RWPE1 (cell line): ENCODE measurements at regions of chr1 and their contacts with region 1.

Region 1: GRCh38 chr1:157147906-157148717 is 9.9 kb upstream of the ETV3 start:
- DNase-seq: no peak
- H3K27ac ChIP-seq: no peak overlapping the region
- CTCF ChIP-seq: no peak

Region 2: DNA sequence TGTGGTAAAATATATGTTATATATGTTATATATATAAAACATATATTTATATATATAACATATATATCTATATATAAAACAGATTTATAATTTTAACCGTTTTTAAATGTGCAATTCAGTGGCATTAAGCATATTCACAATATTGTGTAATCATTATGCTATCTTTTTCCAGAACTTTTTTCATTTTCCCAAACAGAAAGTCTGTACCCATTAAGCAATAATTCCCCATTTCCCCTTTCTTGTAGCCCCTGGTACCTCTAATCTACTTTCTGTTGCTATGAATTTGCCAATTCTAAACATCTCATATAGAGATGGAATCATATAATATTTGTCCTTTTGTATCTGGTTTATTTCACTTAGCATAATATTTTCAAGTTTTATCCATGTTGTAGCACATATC is 91.8 kb before region 1 on chr1:
- CTCF ChIA-PET with region 1: no interaction called
- POLR2A ChIA-PET with region 1: no interaction called
- DNase-seq: no peak
- H3K27ac ChIP-seq: no peak overlapping the region
- CTCF ChIP-seq: no peak

Region 3: GRCh38 chr1:157090196-157090647 is 57.9 kb before region 1 on chr1:
- CTCF ChIA-PET with region 1: interaction called, 154 read pairs
- POLR2A ChIA-PET with region 1: no interaction called
- DNase-seq: peak; percentile 75
- H3K27ac ChIP-seq: no peak overlapping the region
- CTCF ChIP-seq: peak; percentile 92

Region 4: DNA sequence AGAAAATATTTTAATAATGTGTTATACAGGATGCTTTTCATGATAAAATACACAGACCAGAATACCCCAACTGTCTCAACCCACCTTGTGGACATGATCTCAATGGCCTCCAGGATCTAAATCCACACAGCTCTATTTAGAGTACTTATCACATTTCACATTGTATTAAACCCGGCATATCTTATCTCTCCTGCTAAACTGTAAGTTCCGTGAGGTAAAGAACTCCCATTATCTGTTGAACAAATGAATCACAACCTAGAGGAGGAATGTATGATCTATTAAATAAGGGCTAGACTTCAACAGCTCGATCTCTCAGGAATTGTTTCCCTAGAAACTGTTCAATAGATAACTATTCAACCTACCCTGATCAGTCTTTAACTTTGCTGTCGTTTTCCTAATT is 16.8 kb before region 1 on chr1:
- CTCF ChIA-PET with region 1: no interaction called
- POLR2A ChIA-PET with region 1: no interaction called
- DNase-seq: no peak
- H3K27ac ChIP-seq: no peak overlapping the region
- CTCF ChIP-seq: no peak

Region 5: GRCh38 chr1:157288996-157289395 is 140.9 kb after region 1 on chr1:
- CTCF ChIA-PET with region 1: no interaction called
- POLR2A ChIA-PET with region 1: no interaction called
- DNase-seq: no peak
- H3K27ac ChIP-seq: no peak overlapping the region
- CTCF ChIP-seq: no peak